CD8-positive, alpha-beta memory T cell (primary cell): ENCODE measurements at regions of chr5 and their contacts with region 1.

Region 1: GRCh38 chr5:80093796-80094195 is 58.6 kb downstream of the THBS4 start:
- DNase-seq: no peak
- H3K4me3 ChIP-seq: no peak overlapping the region
- H3K4me3 Mint-ChIP-seq: no peak overlapping the region
- H3K27ac ChIP-seq: no peak overlapping the region
- H3K27ac Mint-ChIP-seq: peak overlapping the region in 1 of 8 donors; percentile 7
- H3K4me1 ChIP-seq: peaks cover 24% of the 10 kb centered on the region
- H3K4me1 Mint-ChIP-seq: peaks cover 16 to 26% (median 22%) of the 10 kb centered on the region in 3 donors
- H3K27me3 ChIP-seq: no peaks in the 10 kb centered on the region
- H3K27me3 Mint-ChIP-seq: no peaks in the 10 kb centered on the region

Region 2: GRCh38 chr5:80055491-80056170 is 38.2 kb before region 1 on chr5:
- CTCF ChIA-PET with region 1: no interaction called
- POLR2A ChIA-PET with region 1: no interaction called
- DNase-seq: no peak
- H3K4me3 ChIP-seq: no peak overlapping the region
- H3K4me3 Mint-ChIP-seq: no peak overlapping the region
- H3K27ac ChIP-seq: no peak overlapping the region
- H3K27ac Mint-ChIP-seq: no peak overlapping the region
- H3K4me1 ChIP-seq: no peaks in the 10 kb centered on the region
- H3K4me1 Mint-ChIP-seq: peaks cover 0 to under 1% (median 0%) of the 10 kb centered on the region in 3 donors
- H3K27me3 ChIP-seq: no peaks in the 10 kb centered on the region
- H3K27me3 Mint-ChIP-seq: peaks cover 1 to 4% of the 10 kb centered on the region in 2 donors

Region 3: GRCh38 chr5:80139466-80139972 is 45.7 kb after region 1 on chr5:
- CTCF ChIA-PET with region 1: interaction called, 10 read pairs
- POLR2A ChIA-PET with region 1: interaction called, 3 read pairs
- DNase-seq: no peak
- H3K4me3 ChIP-seq: no peak overlapping the region
- H3K4me3 Mint-ChIP-seq: peak overlapping the region in 2 of 7 donors; percentile 8 to 56
- H3K27ac ChIP-seq: no peak overlapping the region
- H3K27ac Mint-ChIP-seq: peak overlapping the region; percentile 12 to 90 (median 80)
- H3K4me1 ChIP-seq: peaks cover 82% of the 10 kb centered on the region
- H3K4me1 Mint-ChIP-seq: peaks cover 65 to 91% (median 90%) of the 10 kb centered on the region in 3 donors
- H3K27me3 ChIP-seq: no peaks in the 10 kb centered on the region
- H3K27me3 Mint-ChIP-seq: peaks cover 0 to 3% of the 10 kb centered on the region in 2 donors

Region 4: GRCh38 chr5:80275347-80275746 is 181.6 kb after region 1 on chr5:
- CTCF ChIA-PET with region 1: interaction called, 47 read pairs
- POLR2A ChIA-PET with region 1: no interaction called
- DNase-seq: peak in 2 of 5 donors; percentile 16 to 58
- H3K4me3 ChIP-seq: no peak overlapping the region
- H3K4me3 Mint-ChIP-seq: no peak overlapping the region
- H3K27ac ChIP-seq: no peak overlapping the region
- H3K27ac Mint-ChIP-seq: no peak overlapping the region
- H3K4me1 ChIP-seq: peaks cover 20% of the 10 kb centered on the region
- H3K4me1 Mint-ChIP-seq: peaks cover 7 to 12% (median 8%) of the 10 kb centered on the region in 3 donors
- H3K27me3 ChIP-seq: no peaks in the 10 kb centered on the region
- H3K27me3 Mint-ChIP-seq: peaks cover 0 to 4% of the 10 kb centered on the region in 2 donors

Region 5: GRCh38 chr5:80308526-80308925 is 214.7 kb after region 1 on chr5:
- CTCF ChIA-PET with region 1: interaction called, 181 read pairs
- POLR2A ChIA-PET with region 1: interaction called, 3 read pairs
- DNase-seq: no peak
- H3K4me3 ChIP-seq: no peak overlapping the region
- H3K4me3 Mint-ChIP-seq: no peak overlapping the region
- H3K27ac ChIP-seq: no peak overlapping the region
- H3K27ac Mint-ChIP-seq: peak overlapping the region in 1 of 8 donors; percentile 51
- H3K4me1 ChIP-seq: no peaks in the 10 kb centered on the region
- H3K4me1 Mint-ChIP-seq: no peaks in the 10 kb centered on the region
- H3K27me3 ChIP-seq: no peaks in the 10 kb centered on the region
- H3K27me3 Mint-ChIP-seq: peaks cover 0 to 4% of the 10 kb centered on the region in 2 donors